ENCODE measurements at regions of chr9 and their contacts with region 1.

Region 1: GRCh38 chr9:15416880-15417279 is 5.8 kb upstream of the SNAPC3 start:
- DNase-seq: peak; percentile 69
- H3K4me3 ChIP-seq: no peak overlapping the region
- H3K27ac ChIP-seq: no peak overlapping the region
- H3K4me1 ChIP-seq: peaks cover 5% of the 10 kb centered on the region
- H3K27me3 ChIP-seq: no peaks in the 10 kb centered on the region
- CTCF ChIP-seq: peak; percentile 45

Region 2: DNA sequence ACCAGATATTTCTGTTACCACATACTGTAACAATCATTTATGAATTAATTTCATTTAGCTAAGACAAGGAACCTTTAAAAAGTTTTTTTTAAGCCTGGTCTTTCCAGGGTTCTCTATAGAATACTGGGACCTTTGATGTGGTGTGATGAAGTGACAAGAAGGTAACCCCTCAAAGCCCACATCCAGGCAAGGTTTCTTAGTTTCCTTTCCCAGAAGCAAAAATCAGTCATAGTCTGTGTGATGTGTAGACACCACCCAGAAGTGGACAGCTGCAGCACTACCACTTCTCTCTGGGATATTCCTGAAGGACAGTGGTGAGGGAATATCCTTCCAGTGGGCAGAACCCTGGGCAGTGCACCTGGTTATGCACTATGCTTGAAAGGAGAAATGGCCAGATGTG is 225.5 kb before region 1 on chr9:
- intact Hi-C with region 1: no loop called
- DNase-seq: no peak
- H3K4me3 ChIP-seq: no peak overlapping the region
- H3K27ac ChIP-seq: no peak overlapping the region
- H3K4me1 ChIP-seq: no peaks in the 10 kb centered on the region
- H3K27me3 ChIP-seq: no peaks in the 10 kb centered on the region
- CTCF ChIP-seq: no peak

Region 3: DNA sequence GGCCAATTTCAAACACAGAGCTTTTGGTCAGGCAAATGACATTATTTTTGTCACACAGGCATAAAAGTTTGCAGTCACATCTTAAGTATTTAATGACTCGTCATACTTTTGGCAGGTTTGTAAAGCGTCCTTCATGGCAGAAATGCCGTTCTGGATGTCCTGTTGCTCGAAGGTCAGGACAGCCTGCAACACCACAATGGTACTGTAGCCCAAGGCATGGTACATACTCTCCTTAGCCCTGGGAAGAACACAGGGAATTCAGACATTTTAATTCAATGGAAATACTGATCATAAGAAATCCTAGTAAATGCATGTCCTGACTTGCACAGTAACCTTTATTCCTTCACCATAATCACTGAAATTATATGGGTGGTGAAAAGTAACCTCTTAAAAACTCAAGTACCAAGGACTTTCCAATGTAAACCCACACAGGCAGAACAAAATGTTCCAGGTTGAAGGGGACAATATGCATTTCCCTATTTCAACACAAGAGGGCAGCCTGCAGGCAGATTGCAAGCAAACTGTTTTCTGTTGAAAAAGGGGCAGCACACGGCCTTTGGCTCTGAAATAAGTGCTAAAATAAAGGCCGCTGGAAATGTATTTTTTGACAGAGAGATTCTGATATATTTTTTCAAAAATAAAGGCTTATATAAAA is 205.6 kb before region 1 on chr9:
- intact Hi-C with region 1: loop called (anchors 5 kb)
- DNase-seq: peak; percentile 82
- H3K4me3 ChIP-seq: no peak overlapping the region
- H3K27ac ChIP-seq: no peak overlapping the region
- H3K4me1 ChIP-seq: no peaks in the 10 kb centered on the region
- H3K27me3 ChIP-seq: no peaks in the 10 kb centered on the region
- CTCF ChIP-seq: peak; percentile 87

Region 4: GRCh38 chr9:15277400-15278090 is 139.3 kb before region 1 on chr9:
- intact Hi-C with region 1: loop called (anchors 10 kb)
- DNase-seq: no peak
- H3K4me3 ChIP-seq: no peak overlapping the region
- H3K27ac ChIP-seq: no peak overlapping the region
- H3K4me1 ChIP-seq: no peaks in the 10 kb centered on the region
- H3K27me3 ChIP-seq: no peaks in the 10 kb centered on the region
- CTCF ChIP-seq: peak; percentile 30